Activated T-helper 2 cell treated with anti-CD3 and anti-CD28 coated beads, Interferon-gamma antibody, Interleukin-2, Interleukin-4, amounts not matched to agents 10 μg/mL and 5 μg/mL and 100 μg/mL, durations not matched to agents 14 hours and 24 hours and 36 hours (primary cell): ENCODE measurements at regions of chr11 and their contacts with region 1.

Region 1: DNA sequence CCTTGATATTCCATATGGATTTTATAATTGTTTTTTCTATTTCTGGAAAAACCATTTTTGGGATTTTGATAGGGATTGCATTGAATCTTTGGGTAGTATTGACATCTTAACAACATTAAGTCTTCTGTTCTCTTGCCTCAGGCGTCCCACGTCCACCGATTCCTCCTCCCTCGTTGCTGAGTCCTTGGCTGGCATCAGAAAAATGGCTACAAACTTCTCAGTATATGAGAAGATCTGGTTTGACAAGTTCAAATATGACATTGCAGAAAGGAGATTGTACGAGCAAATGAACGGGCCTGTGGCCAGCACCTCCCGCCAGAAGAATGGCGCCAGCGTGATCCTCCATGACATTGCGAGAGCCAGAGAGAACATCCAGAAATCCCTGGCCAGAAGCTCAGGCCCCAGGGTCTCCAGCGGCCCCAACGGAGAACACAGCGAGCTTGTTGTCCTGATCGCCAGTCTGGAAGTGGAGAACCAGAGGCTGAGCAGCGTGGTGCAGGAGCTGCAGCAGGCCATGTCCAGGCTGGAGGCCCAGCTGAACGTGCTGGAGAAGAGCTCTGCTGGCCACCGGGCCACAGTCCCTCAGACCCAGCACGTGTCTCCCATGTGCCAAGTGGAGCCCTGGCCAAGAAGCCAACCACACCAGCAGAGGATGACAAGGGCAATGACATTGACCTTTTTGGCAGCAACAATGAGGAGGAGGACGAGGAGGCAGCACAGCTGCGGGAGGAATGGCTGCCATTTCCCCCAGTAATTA is 20.7 kb upstream of the SCGB1D1 start:
- DNase-seq: no peak
- H3K4me3 Mint-ChIP-seq: no peak overlapping the region
- H3K27ac Mint-ChIP-seq: no peak overlapping the region
- H3K4me1 Mint-ChIP-seq: peaks cover 4% of the 10 kb centered on the region
- H3K27me3 Mint-ChIP-seq: peaks cover 35% of the 10 kb centered on the region

Region 2: GRCh38 chr11:61999141-61999975 is 169.9 kb before region 1 on chr11:
- intact Hi-C with region 1: no loop called
- DNase-seq: no peak
- H3K4me3 Mint-ChIP-seq: no peak overlapping the region
- H3K27ac Mint-ChIP-seq: no peak overlapping the region
- H3K4me1 Mint-ChIP-seq: no peaks in the 10 kb centered on the region
- H3K27me3 Mint-ChIP-seq: no peaks in the 10 kb centered on the region

Region 3: DNA sequence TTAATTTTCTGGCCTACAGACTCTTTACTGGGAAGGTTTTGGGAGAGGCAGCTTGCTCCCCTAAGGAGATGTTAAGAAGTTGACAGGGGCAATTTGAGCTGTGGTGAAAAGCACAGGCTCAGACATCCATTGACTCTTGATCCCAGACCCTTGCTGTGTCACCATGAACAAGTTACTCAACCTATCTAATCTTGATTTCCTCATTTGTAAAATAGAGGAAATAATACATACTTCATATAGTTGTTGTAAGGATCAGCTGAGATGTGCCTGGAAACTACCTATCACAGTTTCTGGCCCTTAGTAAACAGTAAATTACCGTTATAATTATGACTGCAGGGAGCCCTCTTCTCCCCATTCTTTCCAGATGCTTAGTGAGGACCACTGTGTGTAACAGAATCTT is 146.2 kb after region 1 on chr11:
- intact Hi-C with region 1: loop called (anchors 1 kb)
- DNase-seq: no peak
- H3K4me3 Mint-ChIP-seq: no peak overlapping the region
- H3K27ac Mint-ChIP-seq: no peak overlapping the region
- H3K4me1 Mint-ChIP-seq: peaks cover 5% of the 10 kb centered on the region
- H3K27me3 Mint-ChIP-seq: peaks cover 32% of the 10 kb centered on the region

Region 4: GRCh38 chr11:62383822-62384221 is 214.6 kb after region 1 on chr11:
- intact Hi-C with region 1: loop called (anchors 2 kb)
- DNase-seq: no peak
- H3K4me3 Mint-ChIP-seq: no peak overlapping the region
- H3K27ac Mint-ChIP-seq: no peak overlapping the region
- H3K4me1 Mint-ChIP-seq: peaks cover 20% of the 10 kb centered on the region
- H3K27me3 Mint-ChIP-seq: peaks cover 15% of the 10 kb centered on the region

Region 5: GRCh38 chr11:62487738-62488551 is 318.7 kb after region 1 on chr11:
- intact Hi-C with region 1: no loop called
- DNase-seq: no peak
- H3K4me3 Mint-ChIP-seq: no peak overlapping the region
- H3K27ac Mint-ChIP-seq: no peak overlapping the region
- H3K4me1 Mint-ChIP-seq: peaks cover 1% of the 10 kb centered on the region
- H3K27me3 Mint-ChIP-seq: peaks cover 3% of the 10 kb centered on the region